Body of pancreas (tissue), 4 donors: ENCODE measurements at regions of chr18 and their contacts with region 1.

Region 1: GRCh38 chr18:36095936-36096519 is 28.7 kb upstream of the RPRD1A start:
- DNase-seq: no peak
- ATAC-seq: no peak
- H3K4me3 ChIP-seq: no peak overlapping the region
- H3K27ac ChIP-seq: no peak overlapping the region
- H3K4me1 ChIP-seq: no peaks in the 10 kb centered on the region
- H3K27me3 ChIP-seq: no peaks in the 10 kb centered on the region
- CTCF ChIP-seq: peak; percentile 16 to 73 (median 57)
- POLR2A ChIP-seq: no peak

Region 2: DNA sequence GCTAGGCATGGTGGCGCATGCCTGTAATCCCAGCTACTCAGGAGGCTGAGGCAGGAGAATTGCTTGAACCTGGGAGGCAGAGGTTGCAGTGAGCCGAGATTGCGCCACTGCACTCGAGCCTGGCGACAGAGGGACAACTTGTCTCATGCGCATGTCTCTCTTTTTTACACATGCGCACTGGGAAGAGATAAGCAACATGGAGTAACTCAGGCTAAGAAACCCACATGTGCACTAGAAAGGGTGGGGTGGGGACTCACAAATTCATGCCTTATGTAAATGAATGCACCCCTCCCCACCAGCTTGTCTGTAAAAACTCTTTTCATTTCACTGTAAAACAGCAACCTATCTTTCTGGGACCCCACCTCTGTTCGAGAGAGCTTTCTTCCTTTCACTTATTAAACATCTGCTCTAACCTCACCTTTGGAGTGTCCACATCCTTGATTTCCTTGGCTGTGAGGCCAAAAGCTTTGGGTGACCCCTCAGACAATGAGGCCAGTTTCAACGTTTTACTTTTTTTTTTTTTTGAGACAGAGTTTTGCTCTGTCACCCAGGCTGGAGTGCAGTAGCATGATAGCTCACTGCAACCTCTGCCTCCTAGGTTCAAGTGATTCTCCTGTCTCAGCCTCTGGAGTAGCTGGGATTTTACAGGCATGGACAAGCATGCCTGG is 215.1 kb before region 1 on chr18:
- intact Hi-C with region 1: no loop called
- DNase-seq: no peak
- ATAC-seq: no peak
- H3K4me3 ChIP-seq: no peak overlapping the region
- H3K27ac ChIP-seq: no peak overlapping the region
- H3K4me1 ChIP-seq: no peaks in the 10 kb centered on the region
- H3K27me3 ChIP-seq: no peaks in the 10 kb centered on the region
- CTCF ChIP-seq: no peak
- POLR2A ChIP-seq: no peak

Region 3: GRCh38 chr18:36284671-36285295 is 188.8 kb after region 1 on chr18:
- intact Hi-C with region 1: loop called (anchors 5 kb)
- DNase-seq: peak; percentile 48 to 68 (median 56)
- ATAC-seq: peak; percentile 60
- H3K4me3 ChIP-seq: no peak overlapping the region
- H3K27ac ChIP-seq: no peak overlapping the region
- H3K4me1 ChIP-seq: no peaks in the 10 kb centered on the region
- H3K27me3 ChIP-seq: no peaks in the 10 kb centered on the region
- CTCF ChIP-seq: peak; percentile 77 to 94 (median 89)
- POLR2A ChIP-seq: no peak